ENCODE measurements at regions of chr19 and their contacts with region 1.

Region 1: DNA sequence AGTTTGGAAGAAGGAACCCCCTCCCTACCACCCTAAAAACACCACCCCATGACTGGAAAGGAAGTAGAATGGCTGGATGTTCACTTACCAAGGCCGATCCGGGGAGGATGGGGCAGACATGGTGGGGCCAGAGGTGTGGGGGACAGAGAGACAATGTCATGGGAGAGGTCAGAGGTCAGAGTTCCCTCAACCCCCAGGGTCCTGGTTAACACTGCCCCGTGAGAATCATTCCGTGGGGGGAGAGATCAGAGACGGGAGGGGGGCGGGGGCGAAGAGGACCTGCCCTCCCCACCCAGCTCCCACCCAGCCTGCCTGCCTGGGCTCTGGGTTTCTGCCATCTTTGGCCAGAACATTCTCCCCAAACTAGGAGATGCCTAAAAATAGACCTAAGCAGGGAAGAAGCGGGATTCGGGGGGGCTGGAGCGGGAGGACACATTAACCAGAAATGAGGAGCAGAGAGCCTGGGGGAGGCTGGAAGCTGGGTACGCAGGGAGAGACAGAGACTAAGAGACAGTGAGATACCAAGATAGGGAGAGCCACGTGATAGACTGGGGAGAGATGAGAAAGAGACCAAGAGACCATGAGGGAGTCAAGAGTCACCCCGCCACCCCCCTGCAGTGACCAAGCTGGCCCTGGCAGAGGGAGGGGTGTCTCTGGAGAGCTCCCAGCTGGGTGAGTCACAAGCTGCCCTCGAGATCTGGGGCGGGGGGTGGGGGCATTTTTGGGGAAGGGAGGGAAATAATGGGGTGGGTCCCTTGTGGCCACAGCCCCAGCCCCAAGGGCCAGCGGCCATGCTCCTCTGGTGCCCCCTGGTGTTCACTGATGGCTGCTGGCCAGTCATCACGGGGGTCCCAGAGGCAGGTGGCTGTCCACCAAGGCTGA is 6.1 kb upstream of the KANK2 start:
- DNase-seq: peak; percentile 92 to 96 (median 94)
- H3K4me3 ChIP-seq: no peak overlapping the region
- H3K27ac ChIP-seq: peak overlapping the region; percentile 75 to 93
- H3K4me1 ChIP-seq: peaks cover 12% of the 10 kb centered on the region
- H3K27me3 ChIP-seq: no peaks in the 10 kb centered on the region
- CTCF ChIP-seq: peak; percentile 86 to 96 (median 92)
- EP300 ChIP-seq: peak; percentile 92
- POLR2A ChIP-seq: no peak

Region 2: DNA sequence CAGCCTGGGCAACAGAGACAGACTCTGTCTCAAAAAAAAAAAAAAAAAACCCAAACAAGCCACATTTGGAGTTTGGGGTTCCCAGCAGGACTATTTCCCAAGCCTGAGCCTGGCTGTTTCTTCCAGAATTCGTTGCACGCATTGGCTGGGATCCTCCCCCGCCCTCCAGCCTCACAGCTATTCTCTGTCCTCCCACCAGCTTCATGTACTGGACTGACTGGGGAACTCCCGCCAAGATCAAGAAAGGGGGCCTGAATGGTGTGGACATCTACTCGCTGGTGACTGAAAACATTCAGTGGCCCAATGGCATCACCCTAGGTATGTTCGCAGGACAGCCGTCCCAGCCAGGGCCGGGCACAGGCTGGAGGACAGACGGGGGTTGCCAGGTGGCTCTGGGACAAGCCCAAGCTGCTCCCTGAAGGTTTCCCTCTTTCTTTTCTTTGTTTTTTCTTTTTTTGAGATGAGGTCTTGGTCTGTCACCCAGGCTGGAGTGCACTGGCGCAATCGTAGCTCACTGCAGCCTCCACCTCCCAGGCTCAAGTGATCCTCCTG is 87.5 kb before region 1 on chr19:
- intact Hi-C with region 1: no loop called
- DNase-seq: no peak
- H3K4me3 ChIP-seq: no peak overlapping the region
- H3K27ac ChIP-seq: no peak overlapping the region
- H3K4me1 ChIP-seq: no peaks in the 10 kb centered on the region
- H3K27me3 ChIP-seq: no peaks in the 10 kb centered on the region
- CTCF ChIP-seq: no peak
- EP300 ChIP-seq: no peak
- POLR2A ChIP-seq: no peak

Region 3: DNA sequence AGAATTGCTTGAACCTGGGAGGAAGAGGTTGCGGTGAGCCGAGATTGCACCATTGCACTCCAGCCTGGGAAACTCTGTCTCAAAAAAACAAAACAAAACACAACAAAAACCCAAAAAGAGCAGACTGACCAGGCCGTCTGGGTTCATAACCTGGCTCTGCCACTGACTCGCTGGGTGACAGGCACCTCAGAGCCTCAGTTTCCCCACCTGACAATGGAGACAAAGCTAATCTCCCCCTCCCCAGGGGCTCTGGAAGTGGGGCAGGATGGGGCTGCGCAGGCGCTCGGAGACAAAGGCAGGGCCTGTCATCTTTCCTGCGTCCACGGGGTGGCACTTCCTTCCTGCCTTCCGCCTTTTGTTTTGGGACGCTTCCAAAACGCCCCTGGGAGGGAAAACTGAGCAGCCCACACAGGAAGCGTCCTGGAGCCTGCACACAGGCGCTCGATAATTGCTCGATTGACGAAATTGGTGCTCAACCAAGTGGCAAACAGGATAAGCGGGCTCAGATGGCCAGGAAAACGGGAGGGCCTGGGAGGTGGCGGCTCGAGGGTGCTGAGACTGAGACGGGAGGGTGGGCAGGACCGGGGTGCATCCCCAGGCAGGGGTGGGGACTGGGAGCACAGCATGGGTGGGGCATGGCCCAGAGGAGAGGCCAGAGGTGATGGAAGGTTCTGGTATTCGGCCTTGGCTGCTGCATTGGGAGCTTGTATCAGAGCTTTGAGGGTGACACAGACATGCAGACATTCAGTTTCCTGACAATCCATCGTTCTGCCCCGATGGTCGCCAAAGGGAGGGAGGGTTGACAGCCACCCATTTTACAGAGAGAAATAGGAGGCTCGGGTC is 65.7 kb before region 1 on chr19:
- intact Hi-C with region 1: loop called (anchors 1 to 2 kb)
- DNase-seq: peak; percentile 89 to 91 (median 90)
- H3K4me3 ChIP-seq: peak overlapping the region; percentile 32
- H3K27ac ChIP-seq: peak overlapping the region; percentile 85 to 88
- H3K4me1 ChIP-seq: peaks cover 23% of the 10 kb centered on the region
- H3K27me3 ChIP-seq: no peaks in the 10 kb centered on the region
- CTCF ChIP-seq: peak; percentile 77 to 97 (median 96)
- EP300 ChIP-seq: no peak
- POLR2A ChIP-seq: no peak

Region 4: GRCh38 chr19:11148001-11148400 is 55.4 kb before region 1 on chr19:
- intact Hi-C with region 1: no loop called
- DNase-seq: no peak
- H3K4me3 ChIP-seq: no peak overlapping the region
- H3K27ac ChIP-seq: no peak overlapping the region
- H3K4me1 ChIP-seq: peaks cover 8% of the 10 kb centered on the region
- H3K27me3 ChIP-seq: no peaks in the 10 kb centered on the region
- CTCF ChIP-seq: no peak
- EP300 ChIP-seq: no peak
- POLR2A ChIP-seq: no peak

Region 5: DNA sequence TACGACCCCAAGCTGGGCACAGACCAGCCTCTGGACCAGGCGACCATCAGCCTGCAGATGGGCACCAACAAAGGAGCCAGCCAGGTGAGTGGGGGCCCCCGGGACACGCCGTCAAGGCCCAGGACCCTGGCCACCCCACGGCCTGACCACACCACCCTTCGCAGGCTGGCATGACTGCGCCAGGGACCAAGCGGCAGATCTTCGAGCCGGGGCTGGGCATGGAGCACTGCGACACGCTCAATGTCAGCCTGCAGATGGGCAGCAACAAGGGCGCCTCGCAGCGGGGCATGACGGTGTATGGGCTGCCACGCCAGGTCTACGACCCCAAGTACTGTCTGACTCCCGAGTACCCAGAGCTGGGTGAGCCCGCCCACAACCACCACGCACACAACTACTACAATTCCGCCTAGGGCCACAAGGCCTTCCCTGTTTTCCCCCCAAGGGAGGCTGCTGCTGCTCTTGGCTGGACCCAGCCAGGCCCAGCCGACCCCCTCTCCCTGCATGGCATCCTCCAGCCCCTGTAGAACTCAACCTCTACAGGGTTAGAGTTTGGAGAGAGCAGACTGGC is 346.0 kb after region 1 on chr19:
- intact Hi-C with region 1: no loop called
- DNase-seq: peak in 1 of 5 donors; percentile 33
- H3K4me3 ChIP-seq: no peak overlapping the region
- H3K27ac ChIP-seq: no peak overlapping the region
- H3K4me1 ChIP-seq: no peaks in the 10 kb centered on the region
- H3K27me3 ChIP-seq: no peaks in the 10 kb centered on the region
- CTCF ChIP-seq: no peak
- EP300 ChIP-seq: no peak
- POLR2A ChIP-seq: no peak

Measured in ovary (tissue), 10 donors.